ENCODE measurements at regions of chr11 and their contacts with region 1.

Region 1: DNA sequence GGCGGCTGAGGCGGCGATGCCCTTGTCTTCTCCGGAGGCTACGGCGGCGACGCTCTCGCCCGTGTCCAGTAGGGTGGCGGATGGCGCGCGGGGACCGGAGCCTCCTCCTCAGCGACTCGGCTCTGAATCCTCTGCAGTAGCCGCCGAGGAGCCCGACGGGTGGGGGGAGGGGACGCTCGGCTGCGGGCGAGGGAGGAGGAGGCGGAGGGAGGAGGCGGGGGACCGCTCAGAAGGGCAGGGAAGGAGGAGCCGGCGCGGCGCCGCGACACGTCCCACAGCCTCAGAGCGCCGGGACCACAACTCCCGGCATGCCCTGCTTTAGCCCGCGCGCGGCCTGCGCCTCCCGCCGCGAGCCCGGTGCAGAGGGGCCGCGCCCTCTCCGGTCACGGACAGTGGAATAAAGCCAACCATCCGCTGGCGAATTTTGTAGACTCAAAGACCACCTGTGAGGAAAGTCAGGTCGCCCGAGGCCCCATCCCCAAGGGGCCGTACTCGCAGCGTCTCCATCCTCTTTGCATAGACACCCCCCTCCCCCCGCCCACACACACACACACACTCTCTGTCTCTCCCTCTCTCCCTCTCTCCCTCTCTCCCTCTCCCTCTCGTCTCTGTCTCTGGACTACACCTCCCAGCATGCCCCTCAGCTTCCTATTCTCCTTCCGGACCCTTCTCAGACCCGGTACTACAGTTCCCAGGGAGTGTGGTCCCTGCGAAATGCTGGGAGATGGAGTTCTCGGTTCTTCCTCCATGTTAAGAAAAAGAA is at the start of gene FAM168A:
- DNase-seq: peak; percentile 85 to 98 (median 93)
- ATAC-seq: peak; percentile 87
- H3K4me3 ChIP-seq: peak within 1 kb of the TSS; percentile 81 to 99
- H3K4me3 Mint-ChIP-seq: peak within 1 kb of the TSS; percentile 90
- H3K27ac ChIP-seq: peak within 1 kb of the TSS; percentile 76 to 83
- H3K27ac Mint-ChIP-seq: peak within 1 kb of the TSS; percentile 90
- H3K4me1 ChIP-seq: peaks cover 20% of the 10 kb centered on the region
- H3K4me1 Mint-ChIP-seq: peaks cover 46% of the 10 kb centered on the region
- H3K27me3 ChIP-seq: no peaks in the 10 kb centered on the region
- H3K27me3 Mint-ChIP-seq: no peaks in the 10 kb centered on the region
- CTCF ChIP-seq: no peak
- total RNA-seq, gene FAM168A: 18.4 to 18.8 TPM

Region 2: GRCh38 chr11:72222907-72223614 is 1375.1 kb before region 1 on chr11:
- CTCF ChIA-PET with region 1: no interaction called
- POLR2A ChIA-PET with region 1: no interaction called
- intact Hi-C with region 1: loop called in 1 of 2 experiments (anchors 10 kb)
- DNase-seq: peak; percentile 83 to 97 (median 94)
- ATAC-seq: peak; percentile 78
- H3K4me3 ChIP-seq: peak overlapping the region; percentile 48 to 84
- H3K4me3 Mint-ChIP-seq: peak overlapping the region; percentile 87
- H3K27ac ChIP-seq: peak overlapping the region; percentile 23 to 78
- H3K27ac Mint-ChIP-seq: peak overlapping the region; percentile 90
- H3K4me1 ChIP-seq: peaks cover 21% of the 10 kb centered on the region
- H3K4me1 Mint-ChIP-seq: peaks cover 22% of the 10 kb centered on the region
- H3K27me3 ChIP-seq: no peaks in the 10 kb centered on the region
- H3K27me3 Mint-ChIP-seq: peaks cover 4% of the 10 kb centered on the region
- CTCF ChIP-seq: no peak

Region 3: GRCh38 chr11:73376160-73376802 is 221.9 kb before region 1 on chr11 and contains the start of gene RELT:
- CTCF ChIA-PET with region 1: no interaction called
- POLR2A ChIA-PET with region 1: no interaction called
- intact Hi-C with region 1: loop called (anchors 1 to 2 kb)
- DNase-seq: peak; percentile 88 to 96 (median 92)
- ATAC-seq: peak; percentile 95
- H3K4me3 ChIP-seq: peak within 1 kb of the TSS; percentile 74 to 86
- H3K4me3 Mint-ChIP-seq: peak within 1 kb of the TSS; percentile 96
- H3K27ac ChIP-seq: peak within 1 kb of the TSS; percentile 82 to 83
- H3K27ac Mint-ChIP-seq: peak within 1 kb of the TSS; percentile 96
- H3K4me1 ChIP-seq: peaks cover 23% of the 10 kb centered on the region
- H3K4me1 Mint-ChIP-seq: peaks cover 43% of the 10 kb centered on the region
- H3K27me3 ChIP-seq: no peaks in the 10 kb centered on the region
- H3K27me3 Mint-ChIP-seq: no peaks in the 10 kb centered on the region
- CTCF ChIP-seq: peak; percentile 95
- total RNA-seq, gene RELT: 144 to 158 TPM

Region 4: DNA sequence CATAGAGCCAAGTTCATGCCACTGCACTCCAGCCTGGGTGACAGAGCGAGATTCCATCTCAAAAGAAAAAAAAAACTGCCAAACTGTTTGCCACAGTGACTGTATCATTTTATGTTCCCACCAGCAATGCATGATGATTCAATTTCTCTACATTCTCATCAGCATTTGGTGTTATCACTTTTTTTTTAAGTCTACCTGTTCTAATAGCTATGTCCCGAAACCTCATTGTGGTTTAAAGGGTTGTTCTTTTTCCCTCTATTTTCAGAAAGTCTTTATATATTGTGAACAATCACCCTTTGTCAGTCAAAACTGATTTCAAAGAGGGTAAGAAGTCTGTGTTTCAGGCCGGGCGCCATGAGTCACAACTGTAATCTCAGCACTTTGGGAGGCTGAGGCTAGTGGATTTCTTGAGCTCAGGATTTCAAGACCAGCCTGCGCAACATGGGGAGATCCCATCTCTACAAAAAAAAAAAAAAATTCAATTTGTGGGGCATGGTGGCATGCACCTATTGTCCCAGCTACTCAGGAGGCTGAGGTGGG is 14.5 kb after region 1 on chr11:
- CTCF ChIA-PET with region 1: no interaction called
- POLR2A ChIA-PET with region 1: no interaction called
- intact Hi-C with region 1: no loop called
- DNase-seq: no peak
- ATAC-seq: no peak
- H3K4me3 ChIP-seq: no peak overlapping the region
- H3K4me3 Mint-ChIP-seq: no peak overlapping the region
- H3K27ac ChIP-seq: no peak overlapping the region
- H3K27ac Mint-ChIP-seq: no peak overlapping the region
- H3K4me1 ChIP-seq: no peaks in the 10 kb centered on the region
- H3K4me1 Mint-ChIP-seq: no peaks in the 10 kb centered on the region
- H3K27me3 ChIP-seq: no peaks in the 10 kb centered on the region
- H3K27me3 Mint-ChIP-seq: peaks cover 5% of the 10 kb centered on the region
- CTCF ChIP-seq: no peak

Region 5: DNA sequence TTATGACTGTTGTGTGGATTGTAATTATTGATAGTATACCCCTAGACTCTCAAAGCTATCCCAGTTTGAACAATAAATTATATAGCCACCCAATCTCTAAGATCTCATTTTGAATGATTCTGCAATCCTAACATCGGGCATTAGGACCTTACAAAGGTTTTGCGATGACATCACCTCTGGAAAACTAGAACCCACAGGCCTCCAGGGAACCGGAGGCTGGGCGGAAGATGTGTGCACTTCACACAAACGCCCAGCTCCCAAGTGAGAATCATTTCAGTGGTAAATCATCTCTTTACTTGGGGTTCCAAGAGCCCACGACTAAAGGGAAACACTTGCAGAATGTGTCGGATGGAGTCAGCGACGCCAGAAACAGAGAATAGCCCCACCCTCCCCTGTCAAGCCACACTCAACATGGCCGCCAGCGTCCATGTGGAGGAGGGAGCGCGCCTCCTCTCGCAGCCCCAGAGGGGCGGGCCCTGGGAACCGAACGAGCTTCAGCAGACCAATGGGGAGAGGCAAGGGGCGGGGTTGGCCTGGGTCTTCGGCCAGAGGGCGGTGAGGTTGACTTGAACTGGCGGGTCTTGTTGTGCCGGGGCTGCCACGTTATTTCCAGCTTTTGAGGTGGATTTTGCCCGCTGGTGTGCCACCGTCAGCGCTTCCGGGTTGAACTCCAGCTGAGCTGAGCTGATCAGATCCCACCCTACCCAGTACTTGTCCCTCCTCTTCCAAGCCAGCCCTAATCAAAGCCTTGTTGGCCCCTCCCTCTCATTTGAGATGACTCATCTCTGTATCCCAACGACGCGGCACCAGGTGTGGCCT is 181.2 kb after region 1 on chr11:
- CTCF ChIA-PET with region 1: no interaction called
- POLR2A ChIA-PET with region 1: interaction called, 4 read pairs
- intact Hi-C with region 1: loop called (anchors 1 kb)
- DNase-seq: peak; percentile 95 to 99 (median 97)
- ATAC-seq: peak; percentile 97
- H3K4me3 ChIP-seq: peak overlapping the region; percentile 52 to 62
- H3K4me3 Mint-ChIP-seq: peak overlapping the region; percentile 97
- H3K27ac ChIP-seq: peak overlapping the region; percentile 83 to 97
- H3K27ac Mint-ChIP-seq: peak overlapping the region; percentile 100
- H3K4me1 ChIP-seq: peaks cover 4% of the 10 kb centered on the region
- H3K4me1 Mint-ChIP-seq: peaks cover 16% of the 10 kb centered on the region
- H3K27me3 ChIP-seq: no peaks in the 10 kb centered on the region
- H3K27me3 Mint-ChIP-seq: no peaks in the 10 kb centered on the region
- CTCF ChIP-seq: no peak

Region 6: GRCh38 chr11:74170694-74171629 is 572.8 kb after region 1 on chr11 and contains the starts of genes C2CD3 and PPME1:
- CTCF ChIA-PET with region 1: no interaction called
- POLR2A ChIA-PET with region 1: no interaction called
- intact Hi-C with region 1: loop called in 1 of 2 experiments (anchors 1 kb)
- DNase-seq: peak; percentile 95 to 100 (median 96)
- ATAC-seq: peak; percentile 94
- H3K4me3 ChIP-seq: peak within 1 kb of the TSS; percentile 80 to 86
- H3K4me3 Mint-ChIP-seq: no peak within 1 kb of the TSS
- H3K27ac ChIP-seq: peak within 1 kb of the TSS; percentile 64 to 82
- H3K27ac Mint-ChIP-seq: no peak within 1 kb of the TSS
- H3K4me1 ChIP-seq: peaks cover 35% of the 10 kb centered on the region
- H3K4me1 Mint-ChIP-seq: peaks cover 36% of the 10 kb centered on the region
- H3K27me3 ChIP-seq: no peaks in the 10 kb centered on the region
- H3K27me3 Mint-ChIP-seq: no peaks in the 10 kb centered on the region
- CTCF ChIP-seq: no peak
- total RNA-seq, gene C2CD3: 27.1 to 30.5 TPM
- total RNA-seq, gene PPME1: 12.4 to 15.0 TPM

Region 7: DNA sequence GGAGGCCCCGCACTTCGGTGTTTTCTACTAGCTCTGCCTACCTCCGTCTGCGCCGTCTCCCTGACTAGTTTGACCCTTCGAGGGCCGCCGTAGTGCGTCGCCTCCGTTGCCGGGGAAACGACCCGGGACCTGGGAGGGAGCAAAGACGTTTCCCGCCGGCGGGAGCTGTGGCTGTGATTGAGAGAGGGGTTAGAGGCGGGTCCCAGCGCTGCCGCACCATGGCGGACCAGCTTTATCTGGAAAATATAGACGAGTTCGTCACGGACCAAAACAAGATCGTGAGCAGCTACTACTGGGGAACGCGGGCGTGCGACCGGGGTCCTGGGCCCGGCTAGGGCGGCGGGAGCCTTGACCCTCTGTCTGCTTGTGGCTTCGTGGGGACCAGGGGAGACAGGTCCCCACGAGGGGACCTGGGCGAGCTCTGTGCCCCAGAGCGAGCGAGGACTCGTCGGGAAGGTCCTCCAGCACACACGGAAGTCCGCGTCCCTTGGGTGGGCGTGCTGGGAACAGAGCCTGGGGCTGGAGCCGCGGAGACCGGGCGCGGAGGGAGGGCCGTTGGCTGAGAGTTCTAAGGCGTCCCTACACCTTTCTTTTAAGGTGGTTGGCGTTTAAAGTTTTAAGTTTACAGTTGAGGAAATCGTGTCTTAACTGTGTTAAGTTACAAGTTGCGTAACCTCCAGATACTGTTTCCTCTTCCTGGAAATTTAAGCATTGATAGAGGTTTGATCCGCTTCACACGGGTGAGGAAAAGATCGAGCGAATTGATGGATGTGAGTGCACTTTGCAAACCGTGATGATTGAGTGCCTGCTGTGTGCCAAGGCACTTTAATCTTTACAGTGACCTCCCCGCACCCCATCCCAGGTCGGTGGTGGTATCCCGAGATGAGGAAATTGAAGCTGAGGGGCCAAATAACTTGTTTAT is 994.6 kb after region 1 on chr11 and contains the start of gene POLD3:
- CTCF ChIA-PET with region 1: no interaction called
- POLR2A ChIA-PET with region 1: no interaction called
- intact Hi-C with region 1: loop called (anchors 5 kb)
- DNase-seq: peak; percentile 88 to 96 (median 92)
- ATAC-seq: peak; percentile 94
- H3K4me3 ChIP-seq: peak within 1 kb of the TSS; percentile 88 to 100
- H3K4me3 Mint-ChIP-seq: peak within 1 kb of the TSS; percentile 99
- H3K27ac ChIP-seq: peak within 1 kb of the TSS; percentile 82 to 91
- H3K27ac Mint-ChIP-seq: peak within 1 kb of the TSS; percentile 97
- H3K4me1 ChIP-seq: peaks cover 11% of the 10 kb centered on the region
- H3K4me1 Mint-ChIP-seq: peaks cover 19% of the 10 kb centered on the region
- H3K27me3 ChIP-seq: no peaks in the 10 kb centered on the region
- H3K27me3 Mint-ChIP-seq: no peaks in the 10 kb centered on the region
- CTCF ChIP-seq: no peak
- total RNA-seq, gene POLD3: 4.0 TPM